ENCODE measurements at regions of chr1 and their contacts with region 1.

Region 1: DNA sequence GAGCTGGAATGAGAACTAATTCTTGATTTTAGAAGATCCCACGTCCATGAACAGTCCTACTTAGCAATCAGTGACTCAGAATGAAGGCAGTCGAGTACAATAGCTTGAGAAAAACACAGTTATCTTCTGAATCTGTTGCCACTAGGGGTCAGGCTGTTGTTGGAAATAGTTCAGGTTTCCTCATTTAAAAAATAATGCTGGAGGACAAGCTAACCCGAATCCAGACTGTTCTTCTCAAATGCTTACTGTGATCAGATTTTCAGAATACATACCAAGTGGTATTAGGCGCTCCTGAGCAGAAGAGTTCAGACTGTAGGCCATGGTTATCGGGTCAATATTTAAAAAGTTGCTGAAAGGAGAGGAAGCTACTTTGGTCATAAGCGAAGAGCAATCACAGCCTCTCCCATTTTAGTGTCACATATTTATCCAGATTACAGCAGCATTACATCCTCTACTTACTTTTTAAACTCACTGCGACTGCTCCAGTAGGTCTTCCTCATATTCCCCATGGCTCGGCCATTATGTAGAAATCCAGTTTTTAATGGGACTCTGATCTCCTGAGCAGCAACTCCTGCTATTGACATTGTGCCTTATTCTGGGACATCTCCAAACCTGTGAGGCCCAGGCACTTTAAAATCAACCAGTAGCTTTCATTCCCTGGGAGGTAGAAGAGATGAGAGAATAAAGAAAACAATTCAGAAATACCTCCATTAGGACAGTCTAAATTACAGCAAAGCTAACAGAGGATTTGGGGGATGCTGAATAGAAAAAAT is 10.9 kb downstream of the ERRFI1 start:
- DNase-seq: no peak
- H3K4me3 ChIP-seq: peak overlapping the region in 1 of 4 donors; percentile 5
- H3K27ac ChIP-seq: peak overlapping the region; percentile 72 to 99 (median 97)
- H3K4me1 ChIP-seq: peaks cover 0 to 61% (median 55%) of the 10 kb centered on the region in 4 donors
- H3K27me3 ChIP-seq: no peaks in the 10 kb centered on the region
- CTCF ChIP-seq: peak in 3 of 4 experiments; percentile 62 to 76 (median 62)
- EP300 ChIP-seq: no peak
- POLR2A ChIP-seq: no peak

Region 2: DNA sequence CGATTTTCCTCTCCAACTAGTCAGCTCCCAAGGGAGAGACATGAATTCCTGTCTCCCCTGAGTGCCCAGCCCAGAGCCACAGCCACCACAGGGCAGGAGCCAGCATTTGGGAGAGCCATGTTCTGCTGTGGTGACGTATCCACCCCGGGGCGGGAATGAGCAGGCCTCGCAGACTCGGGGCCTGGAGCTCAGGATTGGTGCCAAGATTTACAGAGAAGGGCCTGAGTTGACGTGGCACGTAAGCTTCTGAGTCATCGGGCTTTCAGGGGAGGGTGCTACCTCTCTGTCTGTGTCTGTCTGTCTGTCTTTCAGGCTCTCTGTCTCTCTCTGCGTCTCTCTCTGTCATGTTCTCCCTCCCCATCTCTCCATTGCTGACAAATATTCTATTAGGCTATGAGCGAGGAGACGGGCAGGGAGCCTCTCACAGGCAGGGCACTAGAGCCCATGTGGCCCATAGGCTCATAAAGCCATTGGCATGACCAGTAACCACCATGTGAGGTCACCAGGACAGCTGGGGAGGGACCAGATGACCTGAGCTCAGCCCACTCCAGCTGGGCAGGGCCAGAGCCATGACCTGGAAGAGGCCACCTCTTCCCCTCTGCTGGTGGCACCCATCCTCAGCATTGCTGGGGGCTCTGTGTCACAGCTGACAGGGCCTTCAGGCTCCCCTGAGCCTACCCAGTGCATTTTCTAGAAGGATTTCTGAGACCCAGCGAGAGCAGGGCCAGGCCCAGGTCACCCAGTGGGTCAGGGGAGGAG is 544.2 kb before region 1 on chr1:
- intact Hi-C with region 1: no loop called
- DNase-seq: peak; percentile 92
- H3K4me3 ChIP-seq: no peak overlapping the region
- H3K27ac ChIP-seq: peak overlapping the region; percentile 56 to 64 (median 60)
- H3K4me1 ChIP-seq: peaks cover 0 to 34% (median 26%) of the 10 kb centered on the region in 4 donors
- H3K27me3 ChIP-seq: no peaks in the 10 kb centered on the region
- CTCF ChIP-seq: no peak
- EP300 ChIP-seq: peak in 1 of 4 donors; percentile 9
- POLR2A ChIP-seq: no peak

Region 3: GRCh38 chr1:7784492-7785071 is 230.6 kb before region 1 on chr1:
- intact Hi-C with region 1: no loop called
- DNase-seq: peak; percentile 79
- H3K4me3 ChIP-seq: peak overlapping the region; percentile 57 to 91 (median 70)
- H3K27ac ChIP-seq: peak overlapping the region; percentile 94 to 99 (median 96)
- H3K4me1 ChIP-seq: peaks cover 0 to 55% (median 49%) of the 10 kb centered on the region in 4 donors
- H3K27me3 ChIP-seq: no peaks in the 10 kb centered on the region
- CTCF ChIP-seq: no peak
- EP300 ChIP-seq: no peak
- POLR2A ChIP-seq: no peak

Region 4: GRCh38 chr1:7975212-7975865 is 39.9 kb before region 1 on chr1:
- intact Hi-C with region 1: loop called (anchors 5 kb)
- DNase-seq: peak; percentile 85
- H3K4me3 ChIP-seq: no peak overlapping the region
- H3K27ac ChIP-seq: peak overlapping the region in 3 of 4 donors; percentile 50 to 71 (median 54)
- H3K4me1 ChIP-seq: peaks cover 0 to 16% (median 2%) of the 10 kb centered on the region in 4 donors
- H3K27me3 ChIP-seq: no peaks in the 10 kb centered on the region
- CTCF ChIP-seq: peak; percentile 81 to 89 (median 84)
- EP300 ChIP-seq: no peak
- POLR2A ChIP-seq: no peak

Region 5: DNA sequence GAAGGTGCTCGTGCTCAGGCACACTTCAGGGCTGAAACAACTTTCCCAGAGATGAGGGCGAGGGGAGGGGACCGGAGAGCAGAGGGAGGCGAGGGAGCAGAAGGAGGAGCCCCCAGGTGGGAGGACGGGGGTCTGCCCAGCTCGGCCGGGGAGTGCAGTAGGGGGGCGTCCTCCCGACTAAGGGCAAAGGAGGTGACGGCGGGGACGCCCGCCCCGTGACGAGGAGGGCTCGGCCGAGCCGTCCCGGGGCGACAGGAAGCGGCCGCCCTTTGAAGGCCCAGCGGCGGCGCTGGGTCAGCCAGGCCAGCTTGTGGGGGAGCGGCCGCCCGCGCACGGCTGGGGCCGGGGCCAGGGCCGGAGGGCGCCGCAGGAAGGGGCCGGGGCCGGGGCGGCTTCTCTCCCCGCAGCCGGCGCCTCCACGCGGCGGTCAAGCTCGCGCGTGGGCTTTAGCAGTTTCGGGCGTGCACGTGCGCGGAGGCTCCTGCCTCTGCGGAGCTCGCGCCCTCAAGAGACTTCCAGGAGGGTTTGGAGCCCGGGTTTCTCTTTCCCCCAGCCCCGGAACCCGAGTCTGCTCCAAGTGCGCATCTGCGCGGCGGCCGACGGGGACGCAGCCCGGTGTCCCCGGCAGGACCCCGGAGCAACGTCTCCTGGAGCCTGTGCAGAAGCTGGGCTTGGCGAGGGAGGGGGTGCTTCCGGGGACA is 201.9 kb after region 1 on chr1:
- intact Hi-C with region 1: no loop called
- DNase-seq: peak; percentile 75
- H3K4me3 ChIP-seq: peak overlapping the region; percentile 7 to 56 (median 46)
- H3K27ac ChIP-seq: peak overlapping the region; percentile 73 to 80 (median 76)
- H3K4me1 ChIP-seq: peaks cover 0 to 34% (median 22%) of the 10 kb centered on the region in 4 donors
- H3K27me3 ChIP-seq: no peaks in the 10 kb centered on the region
- CTCF ChIP-seq: no peak
- EP300 ChIP-seq: no peak
- POLR2A ChIP-seq: no peak

Region 6: GRCh38 chr1:8348777-8349491 is 333.7 kb after region 1 on chr1:
- intact Hi-C with region 1: loop called (anchors 10 kb)
- DNase-seq: no peak
- H3K4me3 ChIP-seq: no peak overlapping the region
- H3K27ac ChIP-seq: peak overlapping the region in 3 of 4 donors; percentile 16 to 76 (median 74)
- H3K4me1 ChIP-seq: peaks cover 0 to 55% (median 40%) of the 10 kb centered on the region in 4 donors
- H3K27me3 ChIP-seq: no peaks in the 10 kb centered on the region
- CTCF ChIP-seq: peak; percentile 78 to 94 (median 84)
- EP300 ChIP-seq: no peak
- POLR2A ChIP-seq: no peak

Measured in sigmoid colon (tissue), 7 donors.